ENCODE measurements at regions of chr11 and their contacts with region 1.

Region 1: DNA sequence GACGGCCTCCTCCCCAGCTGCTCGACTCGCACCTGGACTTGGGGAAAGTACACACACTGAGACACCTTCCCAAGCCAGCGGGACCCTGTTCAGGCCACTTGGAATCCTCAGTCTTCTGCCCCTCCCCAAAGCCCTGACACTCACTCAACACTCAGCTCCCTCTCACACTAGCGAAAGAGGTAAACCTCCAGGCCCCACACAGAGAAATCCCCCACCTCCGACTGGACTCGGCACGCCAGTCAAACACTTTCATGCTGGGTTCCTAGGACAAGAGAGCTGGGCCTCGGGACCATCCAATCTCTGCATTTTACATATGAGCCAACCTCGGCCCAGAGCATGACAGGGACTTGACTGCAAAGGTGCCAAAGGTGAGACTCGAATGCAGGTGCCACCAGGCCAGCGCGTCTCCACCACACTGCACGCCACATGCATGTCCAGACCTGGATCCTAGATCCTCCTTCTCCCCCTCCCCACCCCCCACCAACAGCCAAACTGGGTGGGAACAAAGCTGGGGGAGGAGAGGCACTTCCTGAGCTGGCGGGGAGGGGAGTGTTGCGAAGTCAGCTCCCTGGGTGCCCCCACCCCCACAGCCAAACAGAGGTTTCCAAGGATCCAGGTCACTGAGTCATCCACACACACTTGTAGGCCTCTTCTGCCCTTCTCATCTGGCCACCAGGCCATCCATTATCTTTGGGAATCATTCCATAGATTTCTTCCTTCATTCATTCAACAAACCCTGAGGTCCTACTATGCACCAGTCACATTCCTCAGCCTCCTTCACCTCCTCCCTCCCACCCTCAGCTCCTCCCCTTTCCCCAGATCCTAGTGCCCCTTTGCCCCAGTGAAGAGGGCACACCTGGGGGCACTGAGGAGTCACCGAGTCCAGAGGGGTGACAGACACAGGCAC is 10.7 kb upstream of the CD5 start:
- DNase-seq: peak; percentile 41
- H3K4me3 Mint-ChIP-seq: peak overlapping the region; percentile 96
- H3K27ac Mint-ChIP-seq: peak overlapping the region; percentile 98
- H3K4me1 Mint-ChIP-seq: peaks cover 77% of the 10 kb centered on the region
- H3K27me3 Mint-ChIP-seq: no peaks in the 10 kb centered on the region

Region 2: DNA sequence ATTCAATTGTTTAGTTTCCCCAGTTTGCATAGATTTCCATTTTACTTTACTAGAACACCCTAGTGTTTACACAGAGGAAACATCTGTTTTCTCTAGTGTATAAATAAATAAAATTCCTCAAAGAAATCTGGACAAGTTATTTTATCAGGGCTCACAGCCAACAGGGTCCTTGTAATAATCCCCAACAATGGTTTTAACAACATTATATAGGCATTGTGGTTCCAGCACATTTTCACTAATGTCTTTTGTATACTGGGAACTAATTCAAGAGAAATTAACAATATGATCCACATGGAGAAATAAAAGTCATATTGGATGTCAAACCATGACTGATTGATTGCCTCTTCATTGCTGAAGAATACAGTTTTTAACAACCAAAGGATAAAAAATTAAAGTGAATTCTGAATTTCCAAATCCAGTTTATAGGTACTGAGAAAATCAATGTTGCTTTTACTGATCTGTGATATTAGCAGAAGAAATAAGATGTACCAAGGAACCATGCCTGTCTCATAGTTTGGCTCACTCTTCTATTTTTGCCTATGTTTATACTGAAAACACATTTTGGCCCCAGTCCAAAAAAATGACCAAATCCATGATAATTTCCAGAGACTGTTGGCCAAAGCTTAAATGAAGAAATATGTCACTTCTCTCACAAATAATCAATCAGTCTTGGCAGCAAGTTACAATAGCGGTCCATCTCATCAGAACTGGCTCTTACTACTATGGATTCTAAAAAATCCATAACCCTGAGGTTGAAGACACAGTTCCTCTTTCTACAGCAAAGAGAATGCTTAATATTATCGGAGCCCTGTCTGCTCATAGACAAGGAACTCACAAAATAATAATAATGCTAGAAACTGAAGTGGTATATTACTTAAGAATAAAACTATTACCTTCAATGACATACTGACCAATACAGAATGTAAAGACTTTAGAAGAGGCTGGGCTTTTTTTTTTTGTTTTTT is 577.8 kb before region 1 on chr11:
- intact Hi-C with region 1: no loop called
- DNase-seq: no peak
- H3K4me3 Mint-ChIP-seq: no peak overlapping the region
- H3K27ac Mint-ChIP-seq: no peak overlapping the region
- H3K4me1 Mint-ChIP-seq: no peaks in the 10 kb centered on the region
- H3K27me3 Mint-ChIP-seq: no peaks in the 10 kb centered on the region

Region 3: DNA sequence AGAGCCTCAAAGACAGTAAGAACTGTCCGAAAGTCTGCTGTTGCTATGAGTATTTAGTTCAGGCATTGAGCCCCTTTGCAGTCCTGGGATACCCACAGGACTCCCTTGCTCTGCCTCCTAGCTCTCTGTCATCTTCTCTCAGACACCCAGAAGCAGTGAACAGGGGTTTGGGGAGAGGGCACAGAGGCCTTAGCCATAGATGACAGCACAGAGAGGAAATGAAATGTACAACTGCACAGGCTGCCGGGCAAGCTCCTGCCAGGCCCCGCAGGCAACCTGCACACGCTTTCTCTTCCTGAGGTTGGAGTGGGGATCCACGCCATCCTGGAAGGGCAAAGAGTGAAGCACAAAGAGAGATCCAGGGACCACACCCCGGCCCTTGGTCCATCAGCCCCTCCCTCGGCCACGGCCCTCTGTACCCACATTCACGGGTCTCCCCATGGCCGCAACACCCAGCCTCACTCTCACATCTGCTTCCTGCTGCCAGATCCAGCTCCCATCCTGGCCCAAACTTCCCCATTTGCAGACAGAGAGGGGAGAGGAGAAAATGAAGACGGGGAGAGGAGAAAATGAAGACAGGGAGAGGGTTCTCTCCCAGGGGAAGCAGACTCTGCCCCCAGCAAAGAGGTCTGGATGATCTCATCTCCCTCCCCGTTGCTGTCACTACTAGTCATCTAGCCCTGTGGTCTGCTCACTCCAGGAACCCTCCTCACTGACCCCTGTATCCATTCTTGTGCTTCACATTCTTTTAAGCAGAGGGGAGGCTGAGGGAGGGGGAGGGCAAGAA is 79.5 kb before region 1 on chr11:
- intact Hi-C with region 1: no loop called
- DNase-seq: no peak
- H3K4me3 Mint-ChIP-seq: no peak overlapping the region
- H3K27ac Mint-ChIP-seq: peak overlapping the region; percentile 61
- H3K4me1 Mint-ChIP-seq: peaks cover 47% of the 10 kb centered on the region
- H3K27me3 Mint-ChIP-seq: no peaks in the 10 kb centered on the region

Region 4: GRCh38 chr11:61102667-61103571 is 11.3 kb after region 1 on chr11:
- intact Hi-C with region 1: loop called (anchors 1 kb)
- DNase-seq: no peak
- H3K4me3 Mint-ChIP-seq: no peak overlapping the region
- H3K27ac Mint-ChIP-seq: no peak overlapping the region
- H3K4me1 Mint-ChIP-seq: peaks cover 46% of the 10 kb centered on the region
- H3K27me3 Mint-ChIP-seq: no peaks in the 10 kb centered on the region

Region 5: GRCh38 chr11:61111786-61112517 is 20.3 kb after region 1 on chr11:
- intact Hi-C with region 1: loop called (anchors 1 kb)
- DNase-seq: peak; percentile 70
- H3K4me3 Mint-ChIP-seq: peak overlapping the region; percentile 84
- H3K27ac Mint-ChIP-seq: peak overlapping the region; percentile 89
- H3K4me1 Mint-ChIP-seq: peaks cover 99% of the 10 kb centered on the region
- H3K27me3 Mint-ChIP-seq: no peaks in the 10 kb centered on the region

Region 6: GRCh38 chr11:61120706-61121191 is 29.1 kb after region 1 on chr11:
- intact Hi-C with region 1: loop called (anchors 1 kb)
- DNase-seq: no peak
- H3K4me3 Mint-ChIP-seq: peak overlapping the region; percentile 17
- H3K27ac Mint-ChIP-seq: peak overlapping the region; percentile 57
- H3K4me1 Mint-ChIP-seq: peaks cover 54% of the 10 kb centered on the region
- H3K27me3 Mint-ChIP-seq: no peaks in the 10 kb centered on the region

Region 7: GRCh38 chr11:61298663-61299244 is 207.1 kb after region 1 on chr11:
- intact Hi-C with region 1: no loop called
- DNase-seq: no peak
- H3K4me3 Mint-ChIP-seq: no peak overlapping the region
- H3K27ac Mint-ChIP-seq: no peak overlapping the region
- H3K4me1 Mint-ChIP-seq: peaks cover 28% of the 10 kb centered on the region
- H3K27me3 Mint-ChIP-seq: peaks cover 4% of the 10 kb centered on the region